Dorsolateral prefrontal cortex (tissue), 120 donors: ENCODE measurements at regions of chr5 and their contacts with region 1.

Region 1: GRCh38 chr5:36606428-36607113 is at the start of gene SLC1A3:
- DNase-seq: peak in 9 of 10 donors; percentile 7 to 72 (median 65)
- H3K4me3 ChIP-seq: peak within 1 kb of the TSS; percentile 42 to 85 (median 71)
- H3K27ac ChIP-seq: peak within 1 kb of the TSS; percentile 83 to 99 (median 96)
- H3K27me3 ChIP-seq: peaks cover 0 to 14% (median 0%) of the 10 kb centered on the region in 45 donors
- CTCF ChIP-seq: peak in 2 of 56 donors; percentile 3 to 4
- total RNA-seq, gene SLC1A3: 324 to 1,867 (median 637) TPM

Region 2: DNA sequence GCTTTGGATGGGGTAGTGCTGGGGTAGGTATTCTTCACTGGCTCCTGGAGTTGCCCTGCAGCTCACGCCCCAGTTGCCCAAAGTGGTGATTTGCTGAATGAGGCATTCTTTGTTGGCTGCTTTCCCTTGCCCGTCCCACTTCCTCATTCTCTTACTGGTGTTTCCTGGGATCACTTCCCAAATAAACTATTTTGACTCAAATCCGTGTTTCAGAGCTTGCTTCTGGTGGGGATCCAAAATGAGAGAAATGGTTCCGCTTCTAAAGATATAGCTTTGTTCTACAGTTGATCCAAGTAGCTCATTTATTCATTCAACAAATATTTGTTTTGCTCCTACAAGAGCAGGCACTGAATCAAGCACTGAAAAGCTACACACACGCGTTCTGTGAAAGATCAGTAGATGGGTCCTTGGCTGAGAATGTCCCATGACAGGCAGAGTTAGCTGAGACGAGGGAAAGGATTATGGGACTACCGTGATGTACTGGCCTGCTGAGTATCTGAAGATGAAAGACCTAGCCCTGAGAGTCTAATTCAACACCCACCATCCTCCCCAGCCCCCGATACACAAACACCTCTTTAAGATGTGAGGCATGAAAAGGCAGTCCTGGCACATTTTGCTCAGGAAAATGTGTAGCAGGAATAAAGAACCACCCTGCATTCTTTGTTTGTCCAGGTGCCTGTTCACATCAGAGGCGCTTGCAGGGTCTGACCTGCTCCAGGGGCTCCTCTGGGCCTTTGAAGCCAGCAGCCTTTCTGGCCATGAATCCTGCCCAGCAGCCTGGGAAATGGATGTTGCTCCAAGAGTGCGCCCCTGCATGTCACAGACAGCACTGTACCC is 161.8 kb before region 1 on chr5:
- intact Hi-C with region 1: loop called in 1 of 2 experiments (anchors 10 kb)
- DNase-seq: peak in 3 of 10 donors; percentile 38 to 60 (median 54)
- H3K4me3 ChIP-seq: no peak overlapping the region
- H3K27ac ChIP-seq: peak overlapping the region in 42 of 59 donors; percentile 9 to 83 (median 46)
- H3K27me3 ChIP-seq: no peaks in the 10 kb centered on the region
- CTCF ChIP-seq: no peak

Region 3: GRCh38 chr5:36507332-36507952 is 99.1 kb before region 1 on chr5:
- intact Hi-C with region 1: loop called in 1 of 2 experiments (anchors 5 kb)
- DNase-seq: peak; percentile 54 to 75 (median 64)
- H3K4me3 ChIP-seq: no peak overlapping the region
- H3K27ac ChIP-seq: no peak overlapping the region
- H3K27me3 ChIP-seq: no peaks in the 10 kb centered on the region
- CTCF ChIP-seq: peak; percentile 54 to 91 (median 79)

Region 4: GRCh38 chr5:36662291-36662851 is 55.8 kb after region 1 on chr5:
- intact Hi-C with region 1: loop called (anchors 5 kb)
- DNase-seq: peak in 9 of 10 donors; percentile 6 to 64 (median 49)
- H3K4me3 ChIP-seq: peak overlapping the region in 48 of 59 donors; percentile 3 to 56 (median 26)
- H3K27ac ChIP-seq: peak overlapping the region; percentile 72 to 97 (median 92)
- H3K27me3 ChIP-seq: no peaks in the 10 kb centered on the region
- CTCF ChIP-seq: no peak

Region 5: DNA sequence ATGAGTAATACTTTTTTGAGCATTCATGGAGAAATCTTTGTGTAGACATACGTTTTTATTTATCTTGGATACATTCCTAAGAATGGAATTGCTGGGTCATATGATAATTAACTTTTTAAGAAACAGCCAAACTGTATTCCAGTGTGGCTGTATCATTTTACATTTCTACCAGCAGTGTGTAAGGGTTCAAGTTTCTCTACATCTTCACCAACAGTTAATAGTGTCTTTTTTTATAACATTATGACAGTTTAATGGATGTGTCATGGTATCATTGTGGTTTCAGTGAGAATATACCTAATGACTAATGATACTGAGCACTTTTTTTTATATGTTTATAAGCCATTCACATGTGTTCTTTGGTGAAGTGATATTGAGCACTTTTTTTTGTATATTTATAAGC is 322.4 kb after region 1 on chr5:
- intact Hi-C with region 1: no loop called
- DNase-seq: no peak
- H3K4me3 ChIP-seq: no peak overlapping the region
- H3K27ac ChIP-seq: no peak overlapping the region
- H3K27me3 ChIP-seq: no peaks in the 10 kb centered on the region
- CTCF ChIP-seq: no peak